ENCODE measurements at regions of chr5 and their contacts with region 1.

Region 1: GRCh38 chr5:29984156-29984540 is 1209.3 kb upstream of the CDH6 start:
- DNase-seq: no peak
- ATAC-seq: no peak
- H3K4me3 ChIP-seq: no peak overlapping the region
- H3K27ac ChIP-seq: no peak overlapping the region
- H3K4me1 ChIP-seq: no peaks in the 10 kb centered on the region
- H3K27me3 ChIP-seq: no peaks in the 10 kb centered on the region
- CTCF ChIP-seq: no peak

Region 2: DNA sequence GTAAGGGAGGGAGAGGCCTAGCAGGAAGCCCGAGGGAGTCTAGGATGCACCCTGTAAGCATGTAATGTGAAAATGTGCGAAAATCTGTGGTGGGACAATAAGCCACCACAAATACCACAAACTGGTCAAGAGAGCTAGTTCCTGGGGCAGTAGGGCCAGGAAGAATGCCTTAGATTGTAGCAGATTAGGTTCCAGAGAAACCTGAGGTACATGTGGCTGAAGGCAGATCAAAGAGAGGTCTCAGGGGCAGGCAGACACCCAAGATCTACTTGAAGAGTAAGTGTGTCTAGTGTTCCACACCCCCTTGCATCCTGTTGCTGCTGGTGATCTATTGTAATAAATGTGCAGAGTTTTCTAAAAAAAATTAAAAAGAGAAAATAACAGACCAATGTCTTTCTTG is 467.9 kb before region 1 on chr5:
- intact Hi-C with region 1: no loop called
- DNase-seq: no peak
- ATAC-seq: no peak
- H3K4me3 ChIP-seq: no peak overlapping the region
- H3K27ac ChIP-seq: no peak overlapping the region
- H3K4me1 ChIP-seq: no peaks in the 10 kb centered on the region
- H3K27me3 ChIP-seq: no peaks in the 10 kb centered on the region
- CTCF ChIP-seq: no peak

Region 3: DNA sequence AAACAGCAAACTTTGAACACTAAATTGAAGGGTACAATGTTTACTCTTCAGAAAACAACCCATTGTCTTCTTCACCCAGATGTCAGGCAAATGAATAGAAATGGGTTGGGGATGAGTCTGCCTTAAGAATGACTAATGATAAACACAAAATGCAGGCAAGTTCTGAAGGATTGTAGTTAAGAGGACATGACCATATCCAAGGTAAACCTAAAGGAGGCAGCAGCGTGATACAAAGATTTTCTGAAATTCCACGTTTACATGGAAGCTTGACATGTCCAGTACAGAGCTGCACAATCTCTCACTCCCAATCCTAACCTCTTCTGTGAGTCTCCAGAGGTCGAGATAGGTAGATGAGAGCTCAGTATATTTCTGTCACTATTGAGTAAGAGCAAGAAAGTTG is 53.8 kb before region 1 on chr5:
- intact Hi-C with region 1: no loop called
- DNase-seq: no peak
- ATAC-seq: no peak
- H3K4me3 ChIP-seq: no peak overlapping the region
- H3K27ac ChIP-seq: no peak overlapping the region
- H3K4me1 ChIP-seq: no peaks in the 10 kb centered on the region
- H3K27me3 ChIP-seq: no peaks in the 10 kb centered on the region
- CTCF ChIP-seq: no peak

Region 4: GRCh38 chr5:29942089-29942488 is 42.1 kb before region 1 on chr5:
- intact Hi-C with region 1: no loop called
- DNase-seq: no peak
- ATAC-seq: no peak
- H3K4me3 ChIP-seq: no peak overlapping the region
- H3K27ac ChIP-seq: no peak overlapping the region
- H3K4me1 ChIP-seq: no peaks in the 10 kb centered on the region
- H3K27me3 ChIP-seq: no peaks in the 10 kb centered on the region
- CTCF ChIP-seq: no peak

Region 5: DNA sequence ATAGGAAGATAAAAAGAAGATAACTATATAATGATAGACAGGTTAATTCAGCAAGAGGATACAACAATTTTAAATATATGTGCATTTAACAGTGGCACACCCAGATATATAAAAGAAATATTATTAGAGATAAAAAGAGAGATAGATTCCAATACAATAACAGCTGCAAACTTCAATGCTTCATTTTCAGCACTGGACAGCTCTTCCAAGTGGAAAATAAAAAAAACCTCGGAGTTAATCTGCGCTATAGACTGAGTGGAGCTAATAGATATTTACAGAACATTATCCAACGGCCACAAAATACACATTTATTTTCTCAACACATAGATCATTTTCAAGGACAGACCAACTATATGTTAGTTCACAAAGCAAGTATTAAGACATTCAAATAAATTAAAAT is 20.2 kb before region 1 on chr5:
- intact Hi-C with region 1: loop called in 1 of 2 experiments (anchors 1 kb)
- DNase-seq: no peak
- ATAC-seq: no peak
- H3K4me3 ChIP-seq: no peak overlapping the region
- H3K27ac ChIP-seq: no peak overlapping the region
- H3K4me1 ChIP-seq: no peaks in the 10 kb centered on the region
- H3K27me3 ChIP-seq: no peaks in the 10 kb centered on the region
- CTCF ChIP-seq: no peak